ENCODE measurements at regions of chr5 and their contacts with region 1.

Region 1: GRCh38 chr5:75666804-75667203 is 50.4 kb downstream of the POC5 start:
- DNase-seq: no peak
- H3K4me3 ChIP-seq: no peak overlapping the region
- H3K27ac ChIP-seq: no peak overlapping the region
- H3K4me1 ChIP-seq: peaks cover 20% of the 10 kb centered on the region
- H3K27me3 ChIP-seq: no peaks in the 10 kb centered on the region
- CTCF ChIP-seq: no peak

Region 2: GRCh38 chr5:75450070-75450469 is 216.7 kb before region 1 on chr5:
- CTCF ChIA-PET with region 1: no interaction called
- POLR2A ChIA-PET with region 1: no interaction called
- intact Hi-C with region 1: no loop called
- DNase-seq: no peak
- H3K4me3 ChIP-seq: no peak overlapping the region
- H3K27ac ChIP-seq: no peak overlapping the region
- H3K4me1 ChIP-seq: peaks cover 9% of the 10 kb centered on the region
- H3K27me3 ChIP-seq: no peaks in the 10 kb centered on the region
- CTCF ChIP-seq: no peak

Region 3: GRCh38 chr5:75547812-75548211 is 119.0 kb before region 1 on chr5:
- CTCF ChIA-PET with region 1: no interaction called
- POLR2A ChIA-PET with region 1: no interaction called
- intact Hi-C with region 1: no loop called
- DNase-seq: no peak
- H3K4me3 ChIP-seq: no peak overlapping the region
- H3K27ac ChIP-seq: no peak overlapping the region
- H3K4me1 ChIP-seq: no peaks in the 10 kb centered on the region
- H3K27me3 ChIP-seq: no peaks in the 10 kb centered on the region
- CTCF ChIP-seq: no peak

Region 4: DNA sequence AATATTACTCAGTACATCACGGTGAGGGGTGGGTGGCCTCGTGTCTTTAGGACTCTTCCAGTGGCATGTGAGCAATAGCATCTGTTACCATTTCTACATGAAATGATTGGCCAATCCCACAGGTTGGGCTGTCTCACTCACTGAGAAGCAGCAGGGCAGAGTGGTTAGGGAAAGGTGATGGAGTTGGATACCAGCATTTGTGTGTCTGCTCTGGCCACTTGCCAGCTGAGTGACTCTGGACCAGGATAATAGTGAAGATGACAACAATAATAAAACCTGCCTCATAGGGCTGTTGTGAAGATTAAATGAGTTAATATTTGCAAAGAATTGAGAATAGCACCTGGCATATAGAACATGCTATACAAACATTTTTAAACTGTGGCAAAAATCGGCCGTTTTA is 778.3 kb after region 1 on chr5:
- CTCF ChIA-PET with region 1: interaction called, 12 read pairs
- POLR2A ChIA-PET with region 1: no interaction called
- intact Hi-C with region 1: no loop called
- DNase-seq: no peak
- H3K4me3 ChIP-seq: no peak overlapping the region
- H3K27ac ChIP-seq: no peak overlapping the region
- H3K4me1 ChIP-seq: no peaks in the 10 kb centered on the region
- H3K27me3 ChIP-seq: peaks cover 3% of the 10 kb centered on the region; the same call in 1 of the 2 replicates
- CTCF ChIP-seq: no peak